HepG2 (cell line): ENCODE measurements at regions of chrX and their contacts with region 1.

Region 1: DNA sequence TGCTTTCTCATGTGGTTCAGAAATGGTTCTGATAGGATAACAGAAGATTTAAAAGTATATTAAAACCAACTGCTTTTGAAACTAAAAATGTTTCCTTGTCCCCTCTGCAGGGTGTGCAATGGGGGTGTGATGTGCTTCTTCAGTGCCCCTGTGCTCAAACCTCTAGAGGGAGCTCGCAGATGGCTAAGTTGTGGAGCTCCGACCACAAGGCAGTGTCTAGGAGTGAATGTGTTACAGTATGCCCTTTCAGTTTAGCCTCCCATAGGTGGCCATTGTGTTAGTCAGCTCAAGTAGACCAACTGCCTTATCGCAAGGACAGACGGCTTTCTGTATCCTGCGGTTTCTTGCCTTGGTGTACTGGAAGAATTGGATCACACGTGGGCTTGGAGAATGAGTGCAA is 130.5 kb downstream of the TENT5D start:
- DNase-seq: peak; percentile 12
- ATAC-seq: peak; percentile 95
- H3K4me3 ChIP-seq: no peak overlapping the region
- H3K27ac ChIP-seq: no peak overlapping the region
- H3K4me1 ChIP-seq: no peaks in the 10 kb centered on the region
- H3K27me3 ChIP-seq: no peaks in the 10 kb centered on the region
- CTCF ChIP-seq: peak; percentile 39
- EP300 ChIP-seq: no peak
- POLR2A ChIP-seq: no peak
- RAD21 ChIP-seq: no peak

Region 2: GRCh38 chrX:80486299-80486698 is 64.4 kb before region 1 on chrX:
- CTCF ChIA-PET with region 1: no interaction called
- POLR2A ChIA-PET with region 1: no interaction called
- in situ Hi-C with region 1: no loop called
- intact Hi-C with region 1: no loop called
- DNase-seq: no peak
- ATAC-seq: no peak
- H3K4me3 ChIP-seq: no peak overlapping the region
- H3K27ac ChIP-seq: no peak overlapping the region
- H3K4me1 ChIP-seq: no peaks in the 10 kb centered on the region
- H3K27me3 ChIP-seq: no peaks in the 10 kb centered on the region
- CTCF ChIP-seq: no peak
- EP300 ChIP-seq: no peak
- POLR2A ChIP-seq: no peak
- RAD21 ChIP-seq: no peak

Region 3: DNA sequence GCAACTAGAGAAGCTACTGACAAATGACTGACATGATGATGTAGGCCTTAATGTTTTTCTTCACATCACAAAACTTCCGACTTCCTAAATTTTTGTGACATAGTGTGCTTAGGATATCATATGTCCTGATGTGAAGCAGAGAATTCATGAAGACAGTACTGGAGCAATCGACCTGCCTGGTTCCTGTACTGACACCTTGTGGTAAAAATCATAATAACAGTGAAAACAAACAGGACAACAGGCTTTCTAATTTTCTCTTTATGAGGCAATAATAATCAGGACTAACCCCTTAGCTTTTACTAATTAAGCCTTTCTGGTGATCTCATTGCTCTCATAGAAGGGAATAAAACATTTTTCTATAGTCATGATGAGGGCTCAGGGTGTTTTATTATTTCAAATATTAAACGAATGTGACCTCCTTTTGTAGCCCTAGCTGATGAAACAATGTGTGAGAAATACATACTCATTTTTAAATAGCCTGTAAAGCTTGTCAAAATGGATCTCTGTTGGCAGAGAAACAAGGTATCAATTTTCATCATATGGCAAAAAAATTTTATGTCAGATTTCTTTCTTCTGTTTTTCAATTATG is 27.9 kb after region 1 on chrX:
- CTCF ChIA-PET with region 1: no interaction called
- POLR2A ChIA-PET with region 1: no interaction called
- in situ Hi-C with region 1: no loop called
- intact Hi-C with region 1: loop called (anchors 2 kb)
- DNase-seq: peak; percentile 6
- ATAC-seq: peak; percentile 46; the same call in 2 of the 3 replicates
- H3K4me3 ChIP-seq: no peak overlapping the region
- H3K27ac ChIP-seq: no peak overlapping the region
- H3K4me1 ChIP-seq: no peaks in the 10 kb centered on the region
- H3K27me3 ChIP-seq: no peaks in the 10 kb centered on the region
- CTCF ChIP-seq: peak; percentile 45
- EP300 ChIP-seq: no peak
- POLR2A ChIP-seq: no peak
- RAD21 ChIP-seq: no peak

Region 4: GRCh38 chrX:80667967-80668366 is 117.2 kb after region 1 on chrX:
- CTCF ChIA-PET with region 1: no interaction called
- POLR2A ChIA-PET with region 1: no interaction called
- in situ Hi-C with region 1: no loop called
- intact Hi-C with region 1: no loop called
- DNase-seq: no peak
- ATAC-seq: no peak
- H3K4me3 ChIP-seq: no peak overlapping the region
- H3K27ac ChIP-seq: no peak overlapping the region
- H3K4me1 ChIP-seq: no peaks in the 10 kb centered on the region
- H3K27me3 ChIP-seq: no peaks in the 10 kb centered on the region
- CTCF ChIP-seq: no peak
- EP300 ChIP-seq: no peak
- POLR2A ChIP-seq: no peak
- RAD21 ChIP-seq: no peak